Activated CD4-positive, alpha-beta memory T cell treated with anti-CD3 and anti-CD28 coated beads for 36 hours (primary cell): ENCODE measurements at regions of chr17 and their contacts with region 1.

Region 1: GRCh38 chr17:8173056-8173870 is 2.9 kb downstream of the TMEM107 start:
- DNase-seq: peak; percentile 89
- H3K4me3 Mint-ChIP-seq: peak overlapping the region; percentile 77
- H3K27ac Mint-ChIP-seq: peak overlapping the region; percentile 98
- H3K4me1 Mint-ChIP-seq: peaks cover 40% of the 10 kb centered on the region
- H3K27me3 Mint-ChIP-seq: peaks cover 4% of the 10 kb centered on the region

Region 2: GRCh38 chr17:8125157-8125946 is 47.9 kb before region 1 on chr17:
- CTCF ChIA-PET with region 1: no interaction called
- POLR2A ChIA-PET with region 1: interaction called, 52 read pairs
- intact Hi-C with region 1: no loop called
- DNase-seq: peak; percentile 94
- H3K4me3 Mint-ChIP-seq: peak overlapping the region; percentile 83
- H3K27ac Mint-ChIP-seq: peak overlapping the region; percentile 89
- H3K4me1 Mint-ChIP-seq: peaks cover 50% of the 10 kb centered on the region
- H3K27me3 Mint-ChIP-seq: peaks cover 37% of the 10 kb centered on the region

Region 3: DNA sequence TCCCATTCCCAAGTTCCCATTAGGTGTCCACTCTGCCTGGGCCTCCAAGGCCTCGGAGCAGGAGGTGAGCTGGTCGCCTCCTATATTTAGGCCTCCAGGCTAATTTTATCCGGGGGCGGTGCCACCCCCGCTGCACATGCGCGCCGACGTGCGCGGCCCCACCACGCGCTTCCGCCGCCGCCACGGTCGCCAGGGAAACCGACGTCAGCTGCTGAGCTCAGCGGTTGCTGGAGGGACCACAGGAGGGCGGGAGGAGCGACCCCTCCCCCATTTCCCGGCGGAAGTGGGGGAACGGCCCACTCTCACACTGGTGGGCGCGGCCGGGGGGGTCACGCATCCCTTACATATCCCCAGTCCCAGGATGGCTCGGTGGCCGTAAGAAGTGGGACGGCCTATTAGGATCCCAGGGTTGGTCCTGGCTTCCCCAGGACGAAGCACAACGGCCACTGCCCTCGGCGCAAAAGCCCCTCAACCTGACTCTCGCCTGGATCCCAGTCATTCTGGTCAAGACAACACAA is 22.1 kb before region 1 on chr17:
- CTCF ChIA-PET with region 1: interaction called, 6 read pairs
- POLR2A ChIA-PET with region 1: interaction called, 95 read pairs
- intact Hi-C with region 1: loop called (anchors 1 kb)
- DNase-seq: peak; percentile 92
- H3K4me3 Mint-ChIP-seq: peak overlapping the region; percentile 83
- H3K27ac Mint-ChIP-seq: no peak overlapping the region
- H3K4me1 Mint-ChIP-seq: peaks cover 35% of the 10 kb centered on the region
- H3K27me3 Mint-ChIP-seq: no peaks in the 10 kb centered on the region

Region 4: GRCh38 chr17:8162233-8162996 is 10.8 kb before region 1 on chr17 and contains the start of gene VAMP2:
- CTCF ChIA-PET with region 1: interaction called, 10 read pairs
- POLR2A ChIA-PET with region 1: interaction called, 146 read pairs
- intact Hi-C with region 1: loop called (anchors 1 kb)
- DNase-seq: peak; percentile 88
- H3K4me3 Mint-ChIP-seq: peak within 1 kb of the TSS; percentile 86
- H3K27ac Mint-ChIP-seq: peak within 1 kb of the TSS; percentile 95
- H3K4me1 Mint-ChIP-seq: peaks cover 52% of the 10 kb centered on the region
- H3K27me3 Mint-ChIP-seq: no peaks in the 10 kb centered on the region
- total RNA-seq, gene VAMP2: 30.1 to 30.4 TPM

Region 5: GRCh38 chr17:8222630-8223356 is 49.5 kb after region 1 on chr17:
- CTCF ChIA-PET with region 1: no interaction called
- POLR2A ChIA-PET with region 1: interaction called, 37 read pairs
- intact Hi-C with region 1: loop called (anchors 5 kb)
- DNase-seq: peak; percentile 94
- H3K4me3 Mint-ChIP-seq: peak overlapping the region; percentile 98
- H3K27ac Mint-ChIP-seq: peak overlapping the region; percentile 98
- H3K4me1 Mint-ChIP-seq: peaks cover 47% of the 10 kb centered on the region
- H3K27me3 Mint-ChIP-seq: peaks cover 14% of the 10 kb centered on the region

Region 6: DNA sequence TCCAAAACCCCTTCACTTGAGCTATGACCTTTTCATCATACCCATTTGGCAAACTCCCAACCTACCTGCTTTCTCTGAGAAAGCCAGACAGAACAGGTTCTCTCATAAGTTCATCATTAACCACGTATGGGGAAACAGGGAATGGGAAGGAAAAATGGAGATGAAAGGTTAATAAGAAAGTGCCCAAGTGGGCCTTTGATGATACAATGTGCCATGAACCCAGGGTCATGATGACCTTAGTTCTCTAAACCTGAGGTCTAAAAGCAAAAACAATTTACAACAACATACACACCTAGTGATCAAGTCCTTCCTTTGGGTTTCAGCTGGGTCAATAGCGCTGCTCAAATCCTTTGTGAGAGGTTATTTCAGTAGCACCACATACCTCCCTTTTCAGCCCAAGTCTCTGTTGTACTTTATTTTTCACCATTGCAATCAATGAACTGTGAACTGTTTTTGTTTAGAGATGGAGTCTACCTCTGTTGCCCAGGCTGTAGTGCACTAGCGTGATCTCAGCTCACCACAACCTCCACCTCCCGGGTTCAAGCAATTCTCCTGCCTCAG is 100.7 kb after region 1 on chr17:
- CTCF ChIA-PET with region 1: no interaction called
- POLR2A ChIA-PET with region 1: no interaction called
- intact Hi-C with region 1: no loop called
- DNase-seq: no peak
- H3K4me3 Mint-ChIP-seq: no peak overlapping the region
- H3K27ac Mint-ChIP-seq: no peak overlapping the region
- H3K4me1 Mint-ChIP-seq: no peaks in the 10 kb centered on the region
- H3K27me3 Mint-ChIP-seq: no peaks in the 10 kb centered on the region

Region 7: DNA sequence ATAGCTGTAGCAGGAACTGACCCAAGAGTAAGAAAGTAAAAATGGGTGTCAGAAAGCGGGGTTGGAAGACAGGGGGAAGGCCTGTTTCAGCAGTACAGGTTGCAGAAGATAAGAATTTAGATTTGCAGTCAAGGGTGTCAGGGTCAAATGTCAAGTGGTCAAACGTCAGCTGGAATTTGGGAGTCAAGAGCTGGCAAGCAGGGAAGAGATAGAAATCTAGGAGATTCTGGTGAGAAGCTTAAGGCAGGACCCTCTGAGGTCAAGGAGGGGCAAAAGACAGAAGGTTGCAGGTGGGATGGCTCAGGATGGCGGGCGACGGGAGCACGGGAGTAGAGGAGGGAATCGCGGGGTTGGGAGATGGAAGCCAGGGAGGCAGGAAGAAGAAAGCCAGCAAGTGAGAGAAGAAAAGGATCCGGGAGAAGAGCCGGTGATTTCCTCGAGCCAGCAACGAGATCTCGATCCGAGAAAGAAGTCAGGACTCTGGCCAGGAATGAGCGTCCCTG is 121.6 kb after region 1 on chr17:
- CTCF ChIA-PET with region 1: no interaction called
- POLR2A ChIA-PET with region 1: interaction called, 13 read pairs
- intact Hi-C with region 1: no loop called
- DNase-seq: no peak
- H3K4me3 Mint-ChIP-seq: peak overlapping the region; percentile 80
- H3K27ac Mint-ChIP-seq: peak overlapping the region; percentile 77
- H3K4me1 Mint-ChIP-seq: peaks cover 33% of the 10 kb centered on the region
- H3K27me3 Mint-ChIP-seq: no peaks in the 10 kb centered on the region

Region 8: DNA sequence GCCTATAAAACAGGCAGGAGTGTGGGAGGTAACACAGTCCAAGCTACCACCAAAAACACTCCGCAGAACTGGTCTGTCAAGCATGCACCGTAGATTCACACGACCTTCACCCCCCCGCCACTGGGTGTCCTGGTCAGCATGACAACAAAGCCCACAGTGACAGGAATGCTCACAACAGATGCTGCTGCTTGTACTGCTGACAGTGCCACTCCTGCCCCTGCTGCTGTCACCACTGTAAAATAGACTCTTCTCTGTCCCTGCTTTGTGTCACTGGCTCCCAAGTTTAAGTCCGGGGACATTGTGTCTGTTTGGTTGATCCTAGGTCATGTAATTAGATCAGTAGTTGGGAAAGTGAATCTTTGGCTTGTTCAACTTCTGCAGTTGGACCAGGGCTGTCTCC is 159.4 kb after region 1 on chr17:
- CTCF ChIA-PET with region 1: no interaction called
- POLR2A ChIA-PET with region 1: no interaction called
- intact Hi-C with region 1: no loop called
- DNase-seq: no peak
- H3K4me3 Mint-ChIP-seq: no peak overlapping the region
- H3K27ac Mint-ChIP-seq: no peak overlapping the region
- H3K4me1 Mint-ChIP-seq: peaks cover 1% of the 10 kb centered on the region
- H3K27me3 Mint-ChIP-seq: peaks cover 8% of the 10 kb centered on the region